ENCODE measurements at regions of chr2 and their contacts with region 1.

Region 1: DNA sequence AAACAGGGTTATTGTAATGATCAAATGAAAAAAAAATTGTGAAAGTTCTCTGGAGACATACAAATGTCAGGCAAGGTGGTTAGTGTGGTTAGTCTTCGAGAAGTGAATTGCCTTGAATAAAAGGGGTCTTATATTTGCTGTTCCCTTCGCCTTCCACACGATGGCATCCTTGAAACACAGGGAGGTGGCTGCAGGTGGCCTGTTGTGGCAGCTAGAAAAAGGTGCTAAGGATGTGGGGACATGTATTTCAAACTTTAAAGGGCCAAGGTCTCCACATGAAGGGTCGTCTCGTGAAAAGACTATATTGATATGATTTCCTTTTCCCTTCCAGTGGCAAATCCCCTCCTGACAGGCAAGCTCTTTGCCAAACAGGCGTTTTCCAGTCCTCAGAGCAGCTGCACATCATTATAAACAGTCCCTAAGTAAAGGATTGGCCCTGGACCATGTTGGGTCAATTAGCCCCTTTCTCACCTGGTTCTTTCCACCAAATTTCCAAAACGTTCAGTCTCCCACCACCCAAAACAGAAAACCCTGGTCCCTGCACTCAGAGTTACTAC is 68.5 kb downstream of the COPS8 start:
- DNase-seq: no peak
- H3K4me3 ChIP-seq: no peak overlapping the region
- H3K27ac ChIP-seq: peak overlapping the region; percentile 86
- H3K4me1 ChIP-seq: peaks cover 13% of the 10 kb centered on the region
- H3K27me3 ChIP-seq: peaks cover 8% of the 10 kb centered on the region
- CTCF ChIP-seq: peak; percentile 68

Region 2: DNA sequence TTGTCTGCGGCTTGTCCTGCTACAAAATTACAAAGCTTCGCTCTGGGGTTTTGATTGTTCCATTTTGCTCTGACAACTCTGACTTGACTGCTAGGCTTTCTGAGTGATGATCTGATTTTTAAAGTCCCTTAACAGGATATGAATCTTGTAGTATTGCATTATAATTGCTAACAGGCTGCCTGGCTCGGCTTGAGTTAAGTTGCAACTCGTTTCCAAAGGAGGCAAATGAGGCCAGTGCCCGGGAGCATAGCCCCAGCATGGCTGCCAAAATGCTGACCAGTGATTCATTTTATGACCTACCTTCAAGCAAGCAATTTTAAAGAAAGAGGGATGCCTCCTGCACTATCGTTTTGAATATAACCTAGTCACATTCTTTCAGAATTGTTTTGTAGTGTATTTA is 124.4 kb after region 1 on chr2:
- intact Hi-C with region 1: no loop called
- DNase-seq: peak; percentile 58
- H3K4me3 ChIP-seq: no peak overlapping the region
- H3K27ac ChIP-seq: peak overlapping the region; percentile 72
- H3K4me1 ChIP-seq: peaks cover 8% of the 10 kb centered on the region
- H3K27me3 ChIP-seq: no peaks in the 10 kb centered on the region
- CTCF ChIP-seq: no peak

Region 3: GRCh38 chr2:237322564-237322963 is 168.4 kb after region 1 on chr2:
- intact Hi-C with region 1: loop called (anchors 10 kb)
- DNase-seq: no peak
- H3K4me3 ChIP-seq: no peak overlapping the region
- H3K27ac ChIP-seq: peak overlapping the region; percentile 91
- H3K4me1 ChIP-seq: peaks cover 60% of the 10 kb centered on the region
- H3K27me3 ChIP-seq: no peaks in the 10 kb centered on the region
- CTCF ChIP-seq: peak; percentile 66

Region 4: GRCh38 chr2:237408335-237409000 is 254.3 kb after region 1 on chr2:
- intact Hi-C with region 1: loop called (anchors 10 kb)
- DNase-seq: peak; percentile 45
- H3K4me3 ChIP-seq: peak overlapping the region; percentile 62
- H3K27ac ChIP-seq: peak overlapping the region; percentile 82
- H3K4me1 ChIP-seq: peaks cover 54% of the 10 kb centered on the region
- H3K27me3 ChIP-seq: peaks cover 39% of the 10 kb centered on the region
- CTCF ChIP-seq: no peak